PC-9 (cell line): ENCODE measurements at regions of chr20 and their contacts with region 1.

Region 1: DNA sequence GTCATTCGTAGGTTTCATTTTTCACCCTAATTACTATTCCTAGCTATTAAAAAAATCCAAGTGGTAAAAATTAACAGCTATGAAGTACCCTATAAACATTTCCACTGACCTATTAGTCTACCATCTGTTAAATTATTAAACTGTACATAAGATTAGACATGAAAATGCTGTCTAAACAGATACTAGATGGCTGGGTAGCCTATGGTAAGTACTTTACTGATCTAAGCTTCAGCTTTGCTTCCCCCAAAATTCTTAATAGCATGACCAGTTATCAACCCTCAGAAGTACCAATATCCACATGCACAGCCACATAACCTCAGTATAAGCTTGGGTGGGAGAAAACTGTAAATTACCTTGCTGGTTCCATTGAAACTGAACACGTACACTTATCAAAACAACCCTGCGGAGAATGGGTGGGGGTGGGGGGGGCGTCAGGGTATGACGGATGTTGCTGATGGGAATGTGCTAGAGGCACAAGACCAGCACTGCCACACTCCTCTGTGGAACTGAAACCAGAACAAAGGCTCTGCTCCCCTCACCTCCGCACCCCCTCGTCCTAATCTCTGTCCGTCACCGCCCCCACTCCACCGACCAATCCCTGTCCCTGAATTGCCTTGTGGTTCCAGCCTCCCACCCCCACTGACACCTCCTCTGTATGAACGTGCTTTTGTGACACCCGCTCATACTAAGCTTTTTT is 45.3 kb downstream of the B4GALT5 start:
- DNase-seq: no peak
- H3K4me3 ChIP-seq: no peak overlapping the region
- H3K27ac ChIP-seq: peak overlapping the region; percentile 15; the same call in 1 of the 2 replicates
- H3K4me1 ChIP-seq: peaks cover 52% of the 10 kb centered on the region
- H3K27me3 ChIP-seq: no peaks in the 10 kb centered on the region
- CTCF ChIP-seq: no peak

Region 2: DNA sequence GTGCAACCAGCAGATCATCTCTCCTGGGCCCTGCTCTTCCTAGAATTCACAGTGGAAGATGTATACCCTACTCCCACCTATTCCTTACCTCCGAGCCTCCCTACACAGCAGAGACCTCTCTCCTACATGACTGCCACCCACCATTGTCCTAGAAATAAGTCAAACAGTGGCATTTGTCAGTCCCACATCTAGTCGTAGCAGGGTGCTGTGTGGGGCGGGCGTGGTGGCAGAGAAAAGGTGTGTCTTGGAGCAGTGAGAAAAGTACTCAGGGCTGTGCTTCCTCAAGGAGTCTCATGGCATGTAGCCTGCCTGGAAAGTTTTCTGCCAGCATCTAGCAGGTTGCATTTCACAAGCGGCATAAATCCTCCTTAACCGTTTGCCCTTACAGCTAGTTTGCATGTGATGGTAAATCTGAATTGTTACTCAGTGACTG is 41.0 kb before region 1 on chr20:
- CTCF ChIA-PET with region 1: interaction called, 13 read pairs
- POLR2A ChIA-PET with region 1: no interaction called
- intact Hi-C with region 1: no loop called
- DNase-seq: peak; percentile 38 to 80
- H3K4me3 ChIP-seq: no peak overlapping the region
- H3K27ac ChIP-seq: peak overlapping the region; percentile 31
- H3K4me1 ChIP-seq: peaks cover 37% of the 10 kb centered on the region
- H3K27me3 ChIP-seq: no peaks in the 10 kb centered on the region
- CTCF ChIP-seq: no peak